Activated CD8-positive, alpha-beta T cell treated with anti-CD3 and anti-CD28 coated beads, Interleukin-2, amount 10 ng/mL, durations not matched to agents 7 days and 5 days (primary cell): ENCODE measurements at regions of chr7 and their contacts with region 1.

Region 1: GRCh38 chr7:134632937-134633540 is 13.6 kb upstream of the BPGM start:
- DNase-seq: peak; percentile 49
- ATAC-seq: peak; percentile 65
- H3K4me3 Mint-ChIP-seq: no peak overlapping the region
- H3K27ac Mint-ChIP-seq: no peak overlapping the region
- H3K4me1 Mint-ChIP-seq: peaks cover 17% of the 10 kb centered on the region
- H3K27me3 Mint-ChIP-seq: peaks cover 18% of the 10 kb centered on the region

Region 2: GRCh38 chr7:134432296-134433152 is 200.5 kb before region 1 on chr7:
- CTCF ChIA-PET with region 1: interaction called, 11 read pairs
- POLR2A ChIA-PET with region 1: no interaction called
- DNase-seq: peak; percentile 85
- ATAC-seq: peak; percentile 98
- H3K4me3 Mint-ChIP-seq: peak overlapping the region; percentile 73
- H3K27ac Mint-ChIP-seq: peak overlapping the region; percentile 85
- H3K4me1 Mint-ChIP-seq: peaks cover 18% of the 10 kb centered on the region
- H3K27me3 Mint-ChIP-seq: peaks cover 3% of the 10 kb centered on the region

Region 3: GRCh38 chr7:134470864-134471263 is 162.2 kb before region 1 on chr7:
- CTCF ChIA-PET with region 1: no interaction called
- POLR2A ChIA-PET with region 1: no interaction called
- DNase-seq: no peak
- ATAC-seq: no peak
- H3K4me3 Mint-ChIP-seq: no peak overlapping the region
- H3K27ac Mint-ChIP-seq: no peak overlapping the region
- H3K4me1 Mint-ChIP-seq: no peaks in the 10 kb centered on the region
- H3K27me3 Mint-ChIP-seq: peaks cover 7% of the 10 kb centered on the region

Region 4: GRCh38 chr7:134553976-134554375 is 79.1 kb before region 1 on chr7:
- CTCF ChIA-PET with region 1: no interaction called
- POLR2A ChIA-PET with region 1: no interaction called
- DNase-seq: no peak
- ATAC-seq: no peak
- H3K4me3 Mint-ChIP-seq: no peak overlapping the region
- H3K27ac Mint-ChIP-seq: no peak overlapping the region
- H3K4me1 Mint-ChIP-seq: no peaks in the 10 kb centered on the region
- H3K27me3 Mint-ChIP-seq: peaks cover 2% of the 10 kb centered on the region

Region 5: GRCh38 chr7:134646425-134647305 is 13.6 kb after region 1 on chr7 and contains the start of gene BPGM:
- CTCF ChIA-PET with region 1: interaction called, 89 read pairs
- POLR2A ChIA-PET with region 1: interaction called, 10 read pairs
- DNase-seq: peak; percentile 98
- ATAC-seq: peak; percentile 99
- H3K4me3 Mint-ChIP-seq: no peak within 1 kb of the TSS
- H3K27ac Mint-ChIP-seq: no peak within 1 kb of the TSS
- H3K4me1 Mint-ChIP-seq: peaks cover 16% of the 10 kb centered on the region
- H3K27me3 Mint-ChIP-seq: no peaks in the 10 kb centered on the region
- total RNA-seq, gene BPGM: 11.9 to 12.2 TPM

Region 6: DNA sequence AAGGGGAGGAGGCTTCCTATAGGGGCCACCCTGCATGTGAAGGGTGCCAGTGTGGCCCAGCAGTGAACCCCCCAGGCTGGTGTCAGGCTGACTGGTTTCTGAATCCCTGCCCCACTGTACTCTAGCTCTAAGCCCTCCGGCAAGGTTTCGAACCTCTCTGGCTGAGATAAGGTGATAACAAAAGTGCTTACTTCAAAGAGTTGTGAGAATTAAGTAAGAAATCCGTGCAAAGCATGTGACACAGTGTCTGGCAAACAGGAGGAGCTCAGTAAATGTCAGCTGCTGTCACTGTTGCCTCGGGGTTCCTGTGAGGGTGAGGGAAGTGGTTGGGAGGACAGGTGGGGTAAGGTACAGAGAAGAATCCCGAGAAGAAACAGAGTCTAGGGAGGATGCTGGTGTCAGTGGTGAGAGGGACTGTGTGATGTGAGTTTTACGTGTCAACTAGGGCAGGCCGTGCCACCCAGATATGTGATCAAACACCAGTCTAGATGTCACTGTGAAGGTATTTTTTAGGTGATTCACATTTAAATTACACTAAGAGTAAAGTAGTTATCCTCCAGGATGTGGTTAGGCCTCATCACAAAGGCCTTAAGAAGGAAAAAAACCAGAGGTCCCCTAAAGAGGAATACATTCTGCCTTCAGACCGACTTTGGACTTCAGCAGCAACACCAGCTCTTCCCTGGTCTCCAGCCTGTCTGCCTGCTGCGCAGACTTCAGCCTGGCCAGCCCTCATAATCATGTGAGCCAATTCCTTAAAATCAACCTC is 78.0 kb after region 1 on chr7:
- CTCF ChIA-PET with region 1: interaction called, 10 read pairs
- POLR2A ChIA-PET with region 1: no interaction called
- DNase-seq: peak; percentile 66
- ATAC-seq: peak; percentile 83
- H3K4me3 Mint-ChIP-seq: peak overlapping the region; percentile 22
- H3K27ac Mint-ChIP-seq: peak overlapping the region; percentile 90
- H3K4me1 Mint-ChIP-seq: peaks cover 16% of the 10 kb centered on the region
- H3K27me3 Mint-ChIP-seq: no peaks in the 10 kb centered on the region

Region 7: DNA sequence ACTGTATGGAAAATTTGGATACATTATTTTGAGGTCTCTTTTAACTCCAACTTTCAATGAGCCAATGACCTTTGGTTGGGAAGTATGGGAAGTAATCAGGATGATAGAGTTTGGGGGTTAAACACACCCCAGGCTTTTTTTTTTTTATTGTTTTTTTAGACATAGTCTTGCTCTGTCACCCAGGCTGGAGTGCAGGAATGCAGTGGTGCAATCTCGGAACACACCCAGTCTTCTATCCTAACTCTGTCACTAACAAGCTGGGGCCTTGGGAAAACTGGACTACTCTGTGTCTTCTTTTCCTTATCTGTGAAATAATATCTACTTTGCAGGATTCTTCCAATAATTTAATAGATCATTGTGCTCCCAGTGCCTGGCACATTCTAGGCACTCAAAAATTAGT is 315.7 kb after region 1 on chr7:
- CTCF ChIA-PET with region 1: interaction called, 22 read pairs
- POLR2A ChIA-PET with region 1: no interaction called
- DNase-seq: no peak
- ATAC-seq: no peak
- H3K4me3 Mint-ChIP-seq: no peak overlapping the region
- H3K27ac Mint-ChIP-seq: no peak overlapping the region
- H3K4me1 Mint-ChIP-seq: peaks cover 3% of the 10 kb centered on the region
- H3K27me3 Mint-ChIP-seq: no peaks in the 10 kb centered on the region